B cell (primary cell): ENCODE measurements at regions of chr7 and their contacts with region 1.

Region 1: DNA sequence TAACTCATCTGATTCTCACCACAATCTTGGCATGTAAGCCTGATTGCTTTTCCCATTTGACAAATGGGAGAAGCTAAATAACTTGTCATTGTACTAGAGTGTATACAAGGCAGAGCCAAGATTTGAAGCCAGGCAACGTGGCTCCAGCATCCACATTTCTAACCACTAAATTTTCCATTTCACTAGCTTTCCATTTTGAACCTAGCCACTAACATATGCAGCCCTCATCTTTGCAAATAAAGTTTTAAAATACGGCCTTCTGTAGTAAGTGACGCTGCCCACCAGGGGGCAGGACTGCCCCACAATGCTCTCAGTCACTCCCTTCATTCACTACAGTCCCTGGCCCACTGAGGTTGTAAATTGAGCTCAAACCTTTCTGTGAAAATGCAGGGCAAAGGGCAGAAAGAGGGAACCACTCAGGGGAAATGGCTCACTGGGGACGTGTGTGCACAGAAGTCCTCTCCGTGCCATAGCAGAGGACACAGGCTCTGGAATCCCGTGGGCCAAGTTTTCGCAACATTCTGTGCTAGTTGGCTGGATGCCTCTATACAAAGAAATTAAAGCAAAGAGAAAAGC is 315.7 kb downstream of the TNS3 start:
- DNase-seq: peak; percentile 70
- ATAC-seq: peak; percentile 93
- H3K4me3 ChIP-seq: no peak overlapping the region
- H3K4me3 Mint-ChIP-seq: no peak overlapping the region
- H3K27ac ChIP-seq: no peak overlapping the region
- H3K27ac Mint-ChIP-seq: no peak overlapping the region
- H3K4me1 ChIP-seq: no peaks in the 10 kb centered on the region
- H3K4me1 Mint-ChIP-seq: no peaks in the 10 kb centered on the region
- H3K27me3 ChIP-seq: no peaks in the 10 kb centered on the region
- H3K27me3 Mint-ChIP-seq: no peaks in the 10 kb centered on the region
- CTCF ChIP-seq: peak; percentile 93

Region 2: DNA sequence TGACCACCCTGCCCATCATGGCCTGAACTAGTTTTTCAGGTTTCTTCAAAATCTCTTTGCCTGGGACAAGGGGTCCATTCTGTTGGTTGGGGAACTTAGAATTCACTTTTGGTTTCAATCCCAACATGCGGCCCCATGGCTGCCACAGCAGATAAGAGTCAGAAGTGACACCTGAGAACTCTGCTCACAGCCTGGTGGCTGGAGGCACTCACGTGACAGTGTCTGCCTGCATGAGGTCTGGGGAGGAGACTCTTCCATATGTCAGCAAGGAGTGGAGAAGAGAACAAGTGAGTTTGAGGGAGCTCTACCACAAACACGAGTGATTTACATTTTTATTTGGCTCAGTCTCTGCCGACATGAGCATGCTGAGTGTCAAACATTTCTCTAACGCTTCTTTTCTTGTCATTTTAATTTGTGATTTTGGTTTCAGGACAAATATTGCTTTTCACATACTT is 54.7 kb before region 1 on chr7:
- CTCF ChIA-PET with region 1: no interaction called
- POLR2A ChIA-PET with region 1: no interaction called
- intact Hi-C with region 1: no loop called
- DNase-seq: no peak
- ATAC-seq: no peak
- H3K4me3 ChIP-seq: no peak overlapping the region
- H3K4me3 Mint-ChIP-seq: no peak overlapping the region
- H3K27ac ChIP-seq: no peak overlapping the region
- H3K27ac Mint-ChIP-seq: no peak overlapping the region
- H3K4me1 ChIP-seq: no peaks in the 10 kb centered on the region
- H3K4me1 Mint-ChIP-seq: no peaks in the 10 kb centered on the region
- H3K27me3 ChIP-seq: no peaks in the 10 kb centered on the region
- H3K27me3 Mint-ChIP-seq: peaks cover 22% of the 10 kb centered on the region
- CTCF ChIP-seq: no peak

Region 3: DNA sequence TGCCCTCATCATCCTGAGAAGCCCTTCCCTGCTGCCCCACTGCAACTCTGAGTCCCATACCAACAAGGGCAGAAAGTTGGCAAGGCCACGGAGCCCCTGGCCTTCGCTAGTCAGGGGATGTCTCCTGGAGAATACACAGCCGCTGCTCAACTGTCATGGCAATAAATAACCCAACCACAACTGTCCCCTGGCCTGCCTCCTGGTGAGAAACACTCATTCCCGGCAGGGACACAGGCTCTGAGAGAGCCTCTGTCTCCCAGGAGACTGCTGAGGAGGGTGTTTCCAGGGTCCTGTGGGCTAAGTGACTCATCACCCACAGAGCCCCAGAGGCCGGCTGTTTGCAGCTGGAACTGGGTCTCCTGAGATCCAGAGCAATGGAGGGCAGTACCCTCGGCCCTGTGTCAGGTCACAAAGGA is 38.4 kb before region 1 on chr7:
- CTCF ChIA-PET with region 1: no interaction called
- POLR2A ChIA-PET with region 1: no interaction called
- intact Hi-C with region 1: no loop called
- DNase-seq: no peak
- ATAC-seq: peak; percentile 33
- H3K4me3 ChIP-seq: no peak overlapping the region
- H3K4me3 Mint-ChIP-seq: no peak overlapping the region
- H3K27ac ChIP-seq: no peak overlapping the region
- H3K27ac Mint-ChIP-seq: no peak overlapping the region
- H3K4me1 ChIP-seq: peaks cover 9 to 22% of the 10 kb centered on the region in 2 donors
- H3K4me1 Mint-ChIP-seq: peaks cover 27% of the 10 kb centered on the region
- H3K27me3 ChIP-seq: peaks cover 0 to 3% (median 0%) of the 10 kb centered on the region in 4 experiments
- H3K27me3 Mint-ChIP-seq: peaks cover 7% of the 10 kb centered on the region
- CTCF ChIP-seq: no peak

Region 4: DNA sequence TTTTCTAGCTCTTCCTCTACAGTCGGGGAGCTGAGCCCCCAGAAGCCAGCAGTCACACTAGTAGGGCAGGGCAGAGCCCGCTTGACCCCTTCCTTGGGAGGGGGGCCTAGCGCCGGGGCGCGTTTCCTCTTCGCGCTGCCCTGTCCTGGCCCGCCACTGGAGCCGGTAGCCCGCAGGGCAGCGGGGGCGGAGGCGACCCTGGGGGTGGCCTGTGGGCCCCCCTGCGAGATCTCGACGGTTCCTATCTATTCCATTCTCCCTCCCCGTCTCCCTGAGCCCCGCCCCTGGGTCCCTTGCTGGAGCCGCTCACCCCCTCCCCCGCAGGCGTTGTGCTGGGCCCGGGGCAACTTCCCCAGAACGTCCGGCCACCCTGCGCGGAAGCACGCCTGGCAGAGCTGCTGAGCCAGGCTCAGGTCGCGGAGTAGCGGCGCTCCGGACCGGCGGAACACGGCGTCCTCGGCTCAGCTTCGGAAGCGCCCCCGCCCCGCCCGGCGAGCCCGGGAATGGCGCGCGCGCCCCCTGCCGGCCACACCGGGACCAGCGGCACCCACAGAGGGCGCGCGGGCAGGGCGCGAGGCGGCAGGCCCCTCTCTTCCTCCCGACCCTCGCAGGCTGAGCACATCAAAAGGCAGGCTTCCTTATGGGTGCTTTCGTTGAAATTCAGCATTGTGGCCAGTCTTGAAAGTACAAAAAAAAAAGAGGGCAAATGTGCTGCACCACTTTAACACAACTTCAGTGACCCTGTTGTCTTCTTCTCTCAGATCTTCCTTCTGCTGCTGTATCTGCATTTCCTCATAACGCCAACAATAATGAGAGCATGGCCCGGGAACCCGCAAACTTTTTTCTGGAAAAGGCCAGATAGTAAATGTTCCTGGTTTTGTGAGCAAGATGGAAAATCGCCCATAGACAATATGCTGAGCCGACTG is 11.9 kb before region 1 on chr7:
- CTCF ChIA-PET with region 1: interaction called, 27 read pairs
- POLR2A ChIA-PET with region 1: no interaction called
- intact Hi-C with region 1: loop called (anchors 1 kb)
- DNase-seq: peak; percentile 81
- ATAC-seq: peak; percentile 85
- H3K4me3 ChIP-seq: peak overlapping the region; percentile 5 to 65 (median 48)
- H3K4me3 Mint-ChIP-seq: peak overlapping the region; percentile 88
- H3K27ac ChIP-seq: peak overlapping the region in 1 of 2 donors; percentile 45
- H3K27ac Mint-ChIP-seq: peak overlapping the region; percentile 73
- H3K4me1 ChIP-seq: peaks cover 16 to 24% of the 10 kb centered on the region in 2 donors
- H3K4me1 Mint-ChIP-seq: peaks cover 25% of the 10 kb centered on the region
- H3K27me3 ChIP-seq: no peaks in the 10 kb centered on the region
- H3K27me3 Mint-ChIP-seq: peaks cover 5% of the 10 kb centered on the region
- CTCF ChIP-seq: peak; percentile 87

Region 5: GRCh38 chr7:47444379-47445057 is 178.3 kb after region 1 on chr7:
- CTCF ChIA-PET with region 1: interaction called, 12 read pairs
- POLR2A ChIA-PET with region 1: no interaction called
- intact Hi-C with region 1: no loop called
- DNase-seq: peak; percentile 47
- ATAC-seq: peak; percentile 51
- H3K4me3 ChIP-seq: no peak overlapping the region
- H3K4me3 Mint-ChIP-seq: no peak overlapping the region
- H3K27ac ChIP-seq: no peak overlapping the region
- H3K27ac Mint-ChIP-seq: peak overlapping the region; percentile 26
- H3K4me1 ChIP-seq: peaks cover 0 to 5% of the 10 kb centered on the region in 2 donors
- H3K4me1 Mint-ChIP-seq: peaks cover 16% of the 10 kb centered on the region
- H3K27me3 ChIP-seq: no peaks in the 10 kb centered on the region
- H3K27me3 Mint-ChIP-seq: no peaks in the 10 kb centered on the region
- CTCF ChIP-seq: peak; percentile 65

Region 6: GRCh38 chr7:47807756-47808155 is 541.5 kb after region 1 on chr7:
- CTCF ChIA-PET with region 1: interaction called, 15 read pairs
- POLR2A ChIA-PET with region 1: no interaction called
- intact Hi-C with region 1: no loop called
- DNase-seq: peak; percentile 67
- ATAC-seq: peak; percentile 77
- H3K4me3 ChIP-seq: no peak overlapping the region
- H3K4me3 Mint-ChIP-seq: no peak overlapping the region
- H3K27ac ChIP-seq: no peak overlapping the region
- H3K27ac Mint-ChIP-seq: no peak overlapping the region
- H3K4me1 ChIP-seq: peaks cover 16 to 25% of the 10 kb centered on the region in 2 donors
- H3K4me1 Mint-ChIP-seq: peaks cover 43% of the 10 kb centered on the region
- H3K27me3 ChIP-seq: no peaks in the 10 kb centered on the region
- H3K27me3 Mint-ChIP-seq: no peaks in the 10 kb centered on the region
- CTCF ChIP-seq: no peak

Region 7: GRCh38 chr7:47827351-47827756 is 561.1 kb after region 1 on chr7:
- CTCF ChIA-PET with region 1: interaction called, 99 read pairs
- POLR2A ChIA-PET with region 1: no interaction called
- intact Hi-C with region 1: no loop called
- DNase-seq: no peak
- ATAC-seq: no peak
- H3K4me3 ChIP-seq: no peak overlapping the region
- H3K4me3 Mint-ChIP-seq: no peak overlapping the region
- H3K27ac ChIP-seq: no peak overlapping the region
- H3K27ac Mint-ChIP-seq: no peak overlapping the region
- H3K4me1 ChIP-seq: no peaks in the 10 kb centered on the region
- H3K4me1 Mint-ChIP-seq: peaks cover 2% of the 10 kb centered on the region
- H3K27me3 ChIP-seq: peaks cover 0 to 4% (median 1%) of the 10 kb centered on the region in 4 experiments
- H3K27me3 Mint-ChIP-seq: peaks cover 4% of the 10 kb centered on the region
- CTCF ChIP-seq: no peak

Region 8: DNA sequence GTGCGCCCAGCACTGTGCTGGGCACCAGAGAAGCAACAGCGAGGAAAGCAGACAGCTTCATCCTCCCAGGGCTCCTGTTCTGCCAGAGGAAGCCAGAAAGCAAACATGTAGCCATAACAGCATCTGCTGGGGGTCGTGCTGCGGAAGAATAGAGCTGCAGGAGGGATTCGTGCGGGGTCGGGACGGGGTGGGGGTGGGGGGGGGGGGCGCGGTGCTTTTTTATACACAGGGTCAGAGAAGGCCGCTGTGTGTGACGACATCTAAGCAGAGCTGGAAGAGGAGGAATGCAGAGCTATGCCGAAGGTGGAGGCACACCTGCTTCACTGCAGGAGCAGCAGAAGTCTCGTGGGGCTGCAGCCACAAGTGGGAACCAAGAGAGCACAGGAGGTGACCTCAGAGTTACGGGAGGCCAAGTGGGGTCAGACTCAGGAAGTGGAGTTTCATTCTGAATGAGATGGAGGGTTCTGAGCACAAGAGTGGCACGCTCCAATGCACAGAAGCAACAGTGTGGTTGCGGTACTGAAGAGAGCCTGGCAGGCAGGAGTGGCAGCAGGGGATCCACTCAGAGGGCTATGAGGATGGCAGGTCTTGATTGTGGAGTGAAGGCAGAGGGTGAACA is 671.0 kb after region 1 on chr7:
- CTCF ChIA-PET with region 1: interaction called, 34 read pairs
- POLR2A ChIA-PET with region 1: no interaction called
- intact Hi-C with region 1: loop called (anchors 5 kb)
- DNase-seq: peak; percentile 81
- ATAC-seq: peak; percentile 91
- H3K4me3 ChIP-seq: peak overlapping the region in 3 of 5 experiments; percentile 10 to 20 (median 18)
- H3K4me3 Mint-ChIP-seq: peak overlapping the region; percentile 74
- H3K27ac ChIP-seq: no peak overlapping the region
- H3K27ac Mint-ChIP-seq: peak overlapping the region; percentile 64
- H3K4me1 ChIP-seq: peaks cover 29% of the 10 kb centered on the region in 2 donors
- H3K4me1 Mint-ChIP-seq: peaks cover 31% of the 10 kb centered on the region
- H3K27me3 ChIP-seq: no peaks in the 10 kb centered on the region
- H3K27me3 Mint-ChIP-seq: no peaks in the 10 kb centered on the region
- CTCF ChIP-seq: no peak

Region 9: GRCh38 chr7:47968847-47969774 is 702.9 kb after region 1 on chr7:
- CTCF ChIA-PET with region 1: interaction called, 26 read pairs
- POLR2A ChIA-PET with region 1: no interaction called
- intact Hi-C with region 1: loop called (anchors 1 kb)
- DNase-seq: peak; percentile 62
- ATAC-seq: peak; percentile 71
- H3K4me3 ChIP-seq: no peak overlapping the region
- H3K4me3 Mint-ChIP-seq: no peak overlapping the region
- H3K27ac ChIP-seq: no peak overlapping the region
- H3K27ac Mint-ChIP-seq: no peak overlapping the region
- H3K4me1 ChIP-seq: peaks cover 0 to 4% of the 10 kb centered on the region in 2 donors
- H3K4me1 Mint-ChIP-seq: peaks cover 8% of the 10 kb centered on the region
- H3K27me3 ChIP-seq: no peaks in the 10 kb centered on the region
- H3K27me3 Mint-ChIP-seq: no peaks in the 10 kb centered on the region
- CTCF ChIP-seq: peak; percentile 91